ENCODE measurements at regions of chr2 and their contacts with region 1.

Region 1: GRCh38 chr2:101341901-101342624 is 33.6 kb upstream of the RNF149 start:
- DNase-seq: peak; percentile 68 to 77
- ATAC-seq: peak in 7 of 8 donors; percentile 61 to 83 (median 79)
- H3K4me3 ChIP-seq: no peak overlapping the region
- H3K27ac ChIP-seq: no peak overlapping the region
- H3K4me1 ChIP-seq: peaks cover 0 to 31% (median 0%) of the 10 kb centered on the region in 9 donors
- H3K27me3 ChIP-seq: no peaks in the 10 kb centered on the region
- CTCF ChIP-seq: peak; percentile 70 to 90 (median 81)

Region 2: DNA sequence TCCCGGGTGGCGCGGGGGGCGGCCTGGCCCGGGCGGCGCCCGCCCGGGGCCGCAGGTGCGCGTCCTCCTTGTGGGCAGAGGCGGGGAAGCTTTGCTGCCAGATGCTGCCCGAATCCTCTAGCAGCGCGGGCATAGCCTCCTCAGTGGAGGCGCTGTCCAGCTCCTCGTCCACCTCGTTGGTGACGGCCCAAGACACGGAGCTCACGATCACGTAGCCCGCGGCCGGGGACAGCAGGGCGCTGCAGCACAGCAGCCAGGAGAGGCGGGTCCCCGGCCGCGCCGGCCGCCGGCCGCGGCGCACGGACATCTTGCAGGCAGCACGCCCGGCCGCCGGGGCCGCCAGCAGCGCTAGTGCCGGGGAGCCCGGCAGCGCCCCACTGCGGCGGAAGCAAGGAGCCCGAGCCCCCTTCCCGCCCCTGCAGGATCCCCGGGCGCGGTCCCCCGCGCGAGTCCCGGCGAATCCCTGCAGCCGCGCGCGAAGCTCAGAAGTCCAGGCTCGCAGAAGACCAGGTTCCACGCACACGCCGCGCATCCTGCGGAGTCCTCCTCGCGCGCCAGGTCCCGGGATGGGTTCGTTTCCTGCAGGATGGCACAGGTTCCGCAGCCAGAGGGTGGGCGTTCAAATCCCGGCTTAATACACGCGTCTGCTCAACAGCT is 45.2 kb after region 1 on chr2 and contains the start of gene CREG2:
- intact Hi-C with region 1: loop called in 2 of 10 experiments (anchors 2 to 5 kb)
- DNase-seq: peak; percentile 47 to 68
- ATAC-seq: peak; percentile 83 to 95 (median 90)
- H3K4me3 ChIP-seq: peak within 1 kb of the TSS; percentile 28 to 60 (median 52)
- H3K27ac ChIP-seq: no peak within 1 kb of the TSS
- H3K4me1 ChIP-seq: peaks cover 2 to 14% (median 10%) of the 10 kb centered on the region in 9 donors
- H3K27me3 ChIP-seq: peaks cover 0 to 73% (median 34%) of the 10 kb centered on the region in 7 donors
- CTCF ChIP-seq: peak in 8 of 9 donors; percentile 33 to 72 (median 56)
- total RNA-seq, gene CREG2: 0.24 to 1.4 (median 0.70) TPM in 7 of 10 donors, not detected in the others

Region 3: GRCh38 chr2:101463891-101464641 is 122.0 kb after region 1 on chr2:
- intact Hi-C with region 1: no loop called
- DNase-seq: peak in 1 of 2 donors; percentile 60
- ATAC-seq: peak in 7 of 8 donors; percentile 63 to 84 (median 77)
- H3K4me3 ChIP-seq: peak overlapping the region in 1 of 10 donors; percentile 5
- H3K27ac ChIP-seq: peak overlapping the region in 9 of 10 donors; percentile 21 to 84 (median 42)
- H3K4me1 ChIP-seq: peaks cover 0 to 45% (median 18%) of the 10 kb centered on the region in 9 donors
- H3K27me3 ChIP-seq: peaks cover 0 to 87% (median 0%) of the 10 kb centered on the region in 7 donors
- CTCF ChIP-seq: no peak

Region 4: GRCh38 chr2:102449370-102449974 is 1107.4 kb after region 1 on chr2:
- intact Hi-C with region 1: loop called in 1 of 10 experiments (anchors 10 kb)
- DNase-seq: peak; percentile 13 to 17
- ATAC-seq: no peak
- H3K4me3 ChIP-seq: no peak overlapping the region
- H3K27ac ChIP-seq: no peak overlapping the region
- H3K4me1 ChIP-seq: no peaks in the 10 kb centered on the region
- H3K27me3 ChIP-seq: no peaks in the 10 kb centered on the region
- CTCF ChIP-seq: peak in 8 of 9 donors; percentile 27 to 77 (median 68)